ENCODE measurements at regions of chr9 and their contacts with region 1.

Region 1: DNA sequence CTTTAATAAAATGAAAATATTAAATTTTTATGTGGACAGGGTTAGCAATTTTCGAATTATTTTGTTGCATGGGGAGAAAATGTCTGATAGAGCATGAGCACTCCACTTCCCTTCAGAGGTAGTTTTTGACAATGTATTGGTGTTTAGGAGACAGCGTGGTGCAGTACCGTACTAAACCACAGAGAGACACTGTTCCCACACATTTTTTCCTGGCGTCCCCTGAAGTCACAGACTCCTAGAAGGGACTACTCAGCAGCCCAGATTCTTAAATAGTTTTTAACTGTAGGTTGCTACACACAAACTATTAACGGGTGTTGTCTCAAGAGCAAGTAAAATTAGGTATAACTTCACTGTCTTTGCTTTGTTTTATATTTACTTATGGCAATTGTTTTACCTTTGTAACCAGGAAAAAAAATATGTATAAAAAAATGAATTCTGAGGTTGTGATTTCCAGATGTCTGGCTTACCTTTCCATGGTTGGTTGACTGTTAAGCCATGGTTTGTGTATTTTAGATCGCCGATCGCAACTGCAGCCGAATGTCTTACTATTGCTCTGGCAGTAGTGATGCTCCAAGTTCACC is 171.2 kb downstream of the DOCK8 start:
- DNase-seq: no peak

Region 2: GRCh38 chr9:546797-547223 is 160.9 kb after region 1 on chr9:
- intact Hi-C with region 1: no loop called
- DNase-seq: no peak

Region 3: GRCh38 chr9:763692-764524 is 378.0 kb after region 1 on chr9:
- intact Hi-C with region 1: loop called (anchors 5 kb)
- DNase-seq: no peak

Region 4: DNA sequence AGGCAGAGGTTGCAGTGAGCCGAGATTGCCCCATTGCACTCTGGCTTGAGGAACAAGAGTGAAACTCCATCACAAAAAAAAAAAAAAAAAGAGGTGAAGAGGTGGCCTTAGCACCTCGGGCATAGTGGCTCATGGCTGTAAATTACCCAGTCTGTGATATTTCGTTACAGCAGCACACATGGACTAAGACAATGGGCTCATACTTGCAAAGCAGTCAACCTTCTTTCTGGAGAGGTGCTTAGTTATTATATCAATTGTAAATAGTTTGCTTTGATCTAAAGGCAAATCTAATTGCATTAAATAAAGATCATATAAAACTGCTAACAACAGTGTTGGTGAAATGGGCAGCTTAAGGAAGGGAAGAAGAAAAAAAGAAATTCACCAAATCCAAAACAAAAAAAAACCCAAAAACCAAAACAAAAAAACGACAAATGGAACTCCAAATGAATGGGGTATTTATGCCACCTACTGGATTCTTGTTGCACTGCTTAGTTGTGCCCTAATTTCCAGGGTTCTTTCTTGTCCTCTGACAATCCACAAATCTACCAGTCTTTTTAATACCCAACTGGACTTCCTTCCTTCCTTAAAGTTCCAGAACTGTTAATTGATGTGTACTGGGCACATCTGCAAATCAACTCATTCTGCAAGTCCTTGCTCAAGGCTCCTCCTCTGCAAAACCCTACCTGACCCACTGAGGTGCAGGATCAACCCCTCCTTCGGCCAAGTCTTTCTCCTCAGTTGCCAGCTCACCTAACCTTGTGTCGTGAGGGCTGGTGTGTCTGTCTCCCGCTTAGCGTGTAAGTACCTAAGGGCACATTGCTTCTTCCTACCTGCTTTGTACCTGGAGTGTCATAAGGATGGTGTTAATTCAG is 420.6 kb after region 1 on chr9:
- intact Hi-C with region 1: loop called (anchors 10 kb)
- DNase-seq: no peak